ENCODE measurements at regions of chr5 and their contacts with region 1.

Region 1: DNA sequence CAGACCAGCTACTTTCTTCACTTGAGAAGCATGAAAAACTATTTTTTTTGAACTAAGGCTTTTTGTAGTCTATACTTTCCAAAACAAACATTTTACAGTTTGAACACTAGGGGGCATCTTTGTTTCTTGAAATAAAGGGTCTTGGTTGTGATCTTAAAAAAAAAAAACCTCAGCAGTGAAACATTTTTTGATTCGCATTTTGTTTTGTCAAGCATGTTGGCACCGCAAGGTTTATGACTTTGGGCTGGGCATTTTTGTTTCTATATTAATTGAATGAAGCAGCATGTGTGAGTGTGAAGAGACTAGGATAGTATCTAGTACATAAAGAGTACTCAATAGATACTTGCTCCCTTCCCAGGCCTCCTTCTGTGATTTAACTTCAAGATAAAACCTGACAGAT is 31.6 kb upstream of the ACOT12 start:
- DNase-seq: no peak
- ATAC-seq: peak; percentile 24 to 48
- H3K4me3 ChIP-seq: no peak overlapping the region
- H3K27ac ChIP-seq: peak overlapping the region; percentile 27 to 55 (median 44)
- H3K4me1 ChIP-seq: peaks cover 37 to 56% of the 10 kb centered on the region in 2 donors
- H3K27me3 ChIP-seq: no peaks in the 10 kb centered on the region
- CTCF ChIP-seq: peak; percentile 47 to 73 (median 62)
- POLR2A ChIP-seq: no peak

Region 2: GRCh38 chr5:81212211-81212751 is 213.3 kb before region 1 on chr5:
- in situ Hi-C with region 1: no loop called
- intact Hi-C with region 1: no loop called
- DNase-seq: no peak
- ATAC-seq: no peak
- H3K4me3 ChIP-seq: no peak overlapping the region
- H3K27ac ChIP-seq: no peak overlapping the region
- H3K4me1 ChIP-seq: no peaks in the 10 kb centered on the region
- H3K27me3 ChIP-seq: no peaks in the 10 kb centered on the region
- CTCF ChIP-seq: no peak
- POLR2A ChIP-seq: no peak

Region 3: GRCh38 chr5:81233080-81233634 is 192.4 kb before region 1 on chr5 and contains the start of gene CKMT2:
- in situ Hi-C with region 1: no loop called
- intact Hi-C with region 1: loop called (anchors 10 kb)
- DNase-seq: peak; percentile 90 to 97
- ATAC-seq: peak; percentile 47 to 59
- H3K4me3 ChIP-seq: peak within 1 kb of the TSS; percentile 61 to 75 (median 68)
- H3K27ac ChIP-seq: peak within 1 kb of the TSS; percentile 98 to 100 (median 98)
- H3K4me1 ChIP-seq: peaks cover 47 to 49% of the 10 kb centered on the region in 2 donors
- H3K27me3 ChIP-seq: no peaks in the 10 kb centered on the region
- CTCF ChIP-seq: no peak
- POLR2A ChIP-seq: peak; percentile 88 to 91
- total RNA-seq, gene CKMT2: 550 to 1,114 (median 879) TPM

Region 4: GRCh38 chr5:81495286-81495685 is 69.7 kb after region 1 on chr5:
- in situ Hi-C with region 1: no loop called
- intact Hi-C with region 1: no loop called
- DNase-seq: no peak
- ATAC-seq: no peak
- H3K4me3 ChIP-seq: no peak overlapping the region
- H3K27ac ChIP-seq: no peak overlapping the region
- H3K4me1 ChIP-seq: no peaks in the 10 kb centered on the region
- H3K27me3 ChIP-seq: no peaks in the 10 kb centered on the region
- CTCF ChIP-seq: no peak
- POLR2A ChIP-seq: no peak

Region 5: GRCh38 chr5:81751009-81751835 is 325.7 kb after region 1 on chr5 and contains the start of gene SSBP2:
- in situ Hi-C with region 1: loop called in 2 of 4 experiments (anchors 10 kb)
- intact Hi-C with region 1: loop called (anchors 5 kb)
- DNase-seq: peak; percentile 98 to 100
- ATAC-seq: peak; percentile 76 to 81
- H3K4me3 ChIP-seq: peak within 1 kb of the TSS; percentile 81 to 84 (median 82)
- H3K27ac ChIP-seq: peak within 1 kb of the TSS; percentile 86 to 99 (median 98)
- H3K4me1 ChIP-seq: peaks cover 41 to 59% of the 10 kb centered on the region in 2 donors
- H3K27me3 ChIP-seq: no peaks in the 10 kb centered on the region
- CTCF ChIP-seq: peak in 1 of 5 experiments; percentile 30
- POLR2A ChIP-seq: peak; percentile 68 to 84
- total RNA-seq, gene SSBP2: 30.4 to 66.5 (median 40.5) TPM

Region 6: DNA sequence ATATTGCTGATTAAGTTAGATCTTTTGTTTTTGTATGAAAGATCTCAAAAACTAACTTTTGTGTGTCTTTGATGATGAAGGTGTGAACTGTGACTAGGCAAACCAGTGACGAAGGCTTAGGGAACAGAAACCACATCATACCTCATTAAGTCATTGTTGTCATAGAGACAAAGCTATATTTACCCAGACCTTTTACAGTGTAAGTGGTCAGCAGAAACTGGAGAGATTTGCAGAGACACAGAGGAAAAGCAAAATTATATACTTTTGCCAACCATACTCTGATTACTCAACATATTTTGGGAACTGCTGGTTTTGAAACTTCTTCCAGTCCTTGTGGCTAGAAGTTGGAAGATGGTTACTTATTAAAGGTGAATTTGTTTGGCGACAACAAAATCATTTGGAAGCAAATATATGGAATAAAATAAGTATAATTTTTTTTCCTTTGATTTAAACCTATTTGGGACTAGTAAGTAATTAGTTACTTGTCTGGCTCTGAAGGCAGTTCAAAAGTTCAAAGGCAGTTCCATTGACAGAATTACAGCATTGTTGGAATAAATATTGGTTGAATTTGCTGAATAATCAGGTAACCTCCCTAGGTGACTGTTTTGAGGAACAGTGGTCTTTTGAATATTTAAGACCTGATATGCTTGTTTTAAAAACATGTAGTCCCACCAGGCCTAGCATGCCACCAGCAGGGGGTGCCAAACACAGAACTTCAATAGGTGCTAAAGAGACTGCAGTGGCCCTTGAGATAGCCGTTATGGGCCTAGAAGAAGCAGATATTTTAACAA is 748.8 kb after region 1 on chr5:
- in situ Hi-C with region 1: loop called in 2 of 4 experiments (anchors 10 kb)
- intact Hi-C with region 1: no loop called
- DNase-seq: peak in 1 of 2 donors; percentile 25
- ATAC-seq: peak in 1 of 2 donors; percentile 66
- H3K4me3 ChIP-seq: no peak overlapping the region
- H3K27ac ChIP-seq: no peak overlapping the region
- H3K4me1 ChIP-seq: no peaks in the 10 kb centered on the region
- H3K27me3 ChIP-seq: no peaks in the 10 kb centered on the region
- CTCF ChIP-seq: peak; percentile 10 to 54 (median 32)
- POLR2A ChIP-seq: no peak

Region 7: GRCh38 chr5:82225525-82226172 is 800.1 kb after region 1 on chr5:
- in situ Hi-C with region 1: no loop called
- intact Hi-C with region 1: loop called (anchors 1 kb)
- DNase-seq: peak; percentile 33 to 50
- ATAC-seq: peak; percentile 67 to 95
- H3K4me3 ChIP-seq: no peak overlapping the region
- H3K27ac ChIP-seq: no peak overlapping the region
- H3K4me1 ChIP-seq: no peaks in the 10 kb centered on the region
- H3K27me3 ChIP-seq: no peaks in the 10 kb centered on the region
- CTCF ChIP-seq: peak; percentile 70 to 86 (median 82)
- POLR2A ChIP-seq: no peak

Measured in gastrocnemius medialis (tissue), 4 donors.